ENCODE measurements at regions of chr17 and their contacts with region 1.

Region 1: DNA sequence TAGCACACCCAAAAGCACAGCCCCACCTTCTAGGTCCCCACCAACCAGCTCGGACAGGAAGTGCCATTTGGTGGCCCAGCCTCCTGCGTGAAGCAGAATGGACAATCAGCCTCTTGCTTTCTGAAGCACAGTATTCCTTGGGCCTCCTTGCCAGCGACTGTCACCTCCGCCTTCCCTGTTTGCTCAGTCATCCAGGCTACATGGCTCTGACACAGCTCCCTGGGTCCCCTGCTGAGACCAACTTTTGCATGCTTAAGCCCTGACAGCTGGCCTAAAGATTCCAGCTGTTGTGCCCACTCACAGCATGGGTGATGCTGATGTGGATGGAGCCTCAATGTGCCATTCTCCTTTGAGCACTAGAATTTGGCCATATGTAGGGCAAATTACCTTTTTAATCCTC is 4.5 kb upstream of the CACNG5 start:
- DNase-seq: no peak
- H3K4me3 Mint-ChIP-seq: no peak overlapping the region
- H3K27ac Mint-ChIP-seq: no peak overlapping the region
- H3K4me1 Mint-ChIP-seq: no peaks in the 10 kb centered on the region
- H3K27me3 Mint-ChIP-seq: peaks cover 62% of the 10 kb centered on the region

Region 2: DNA sequence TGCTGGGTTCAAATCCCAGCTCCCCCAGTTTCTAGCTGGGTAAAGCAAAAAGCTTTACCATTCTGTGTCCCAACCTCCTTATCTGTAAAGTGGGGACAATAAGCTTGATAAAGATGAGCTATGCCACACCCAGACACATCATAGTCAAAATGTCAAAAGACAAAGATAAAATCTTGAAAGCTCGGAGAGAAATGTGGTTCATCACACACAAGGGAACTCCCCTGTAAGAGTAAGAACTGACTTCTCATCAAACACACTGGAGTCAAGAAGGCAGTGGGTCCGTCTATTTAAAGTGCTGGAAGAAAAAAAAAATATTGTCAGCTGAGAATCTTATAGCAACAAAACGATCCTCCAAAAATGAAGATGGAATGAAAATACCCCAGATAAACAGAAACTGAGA is 29.8 kb after region 1 on chr17:
- CTCF ChIA-PET with region 1: no interaction called
- POLR2A ChIA-PET with region 1: interaction called, 12 read pairs
- DNase-seq: no peak
- H3K4me3 Mint-ChIP-seq: no peak overlapping the region
- H3K27ac Mint-ChIP-seq: no peak overlapping the region
- H3K4me1 Mint-ChIP-seq: no peaks in the 10 kb centered on the region
- H3K27me3 Mint-ChIP-seq: peaks cover 8% of the 10 kb centered on the region

Region 3: GRCh38 chr17:66892037-66892645 is 61.7 kb after region 1 on chr17:
- CTCF ChIA-PET with region 1: no interaction called
- POLR2A ChIA-PET with region 1: no interaction called
- DNase-seq: no peak
- H3K4me3 Mint-ChIP-seq: no peak overlapping the region
- H3K27ac Mint-ChIP-seq: no peak overlapping the region
- H3K4me1 Mint-ChIP-seq: no peaks in the 10 kb centered on the region
- H3K27me3 Mint-ChIP-seq: peaks cover 6% of the 10 kb centered on the region